PC-9 (cell line): ENCODE measurements at regions of chr1 and their contacts with region 1.

Region 1: GRCh38 chr1:59296358-59297256 is at the start of gene FGGY:
- DNase-seq: peak; percentile 95 to 97
- H3K4me3 ChIP-seq: peak within 1 kb of the TSS; percentile 78
- H3K27ac ChIP-seq: peak within 1 kb of the TSS; percentile 96
- H3K4me1 ChIP-seq: peaks cover 32% of the 10 kb centered on the region
- H3K27me3 ChIP-seq: no peaks in the 10 kb centered on the region
- CTCF ChIP-seq: no peak
- total RNA-seq, gene FGGY: 17.8 and 22.5 TPM in 2 replicates

Region 2: GRCh38 chr1:58266242-58266641 is 1030.4 kb before region 1 on chr1:
- CTCF ChIA-PET with region 1: no interaction called
- POLR2A ChIA-PET with region 1: interaction called, 19 read pairs
- intact Hi-C with region 1: no loop called
- DNase-seq: no peak
- H3K4me3 ChIP-seq: no peak overlapping the region
- H3K27ac ChIP-seq: no peak overlapping the region
- H3K4me1 ChIP-seq: no peaks in the 10 kb centered on the region
- H3K27me3 ChIP-seq: peaks cover 11% of the 10 kb centered on the region; the same call in 1 of the 2 replicates
- CTCF ChIP-seq: no peak

Region 3: GRCh38 chr1:58883037-58883887 is 413.3 kb before region 1 on chr1:
- CTCF ChIA-PET with region 1: no interaction called
- POLR2A ChIA-PET with region 1: no interaction called
- intact Hi-C with region 1: loop called (anchors 1 kb)
- DNase-seq: peak; percentile 87 to 98
- H3K4me3 ChIP-seq: peak overlapping the region; percentile 16; the same call in 1 of the 2 replicates
- H3K27ac ChIP-seq: peak overlapping the region; percentile 99
- H3K4me1 ChIP-seq: peaks cover 68% of the 10 kb centered on the region
- H3K27me3 ChIP-seq: no peaks in the 10 kb centered on the region
- CTCF ChIP-seq: no peak

Region 4: DNA sequence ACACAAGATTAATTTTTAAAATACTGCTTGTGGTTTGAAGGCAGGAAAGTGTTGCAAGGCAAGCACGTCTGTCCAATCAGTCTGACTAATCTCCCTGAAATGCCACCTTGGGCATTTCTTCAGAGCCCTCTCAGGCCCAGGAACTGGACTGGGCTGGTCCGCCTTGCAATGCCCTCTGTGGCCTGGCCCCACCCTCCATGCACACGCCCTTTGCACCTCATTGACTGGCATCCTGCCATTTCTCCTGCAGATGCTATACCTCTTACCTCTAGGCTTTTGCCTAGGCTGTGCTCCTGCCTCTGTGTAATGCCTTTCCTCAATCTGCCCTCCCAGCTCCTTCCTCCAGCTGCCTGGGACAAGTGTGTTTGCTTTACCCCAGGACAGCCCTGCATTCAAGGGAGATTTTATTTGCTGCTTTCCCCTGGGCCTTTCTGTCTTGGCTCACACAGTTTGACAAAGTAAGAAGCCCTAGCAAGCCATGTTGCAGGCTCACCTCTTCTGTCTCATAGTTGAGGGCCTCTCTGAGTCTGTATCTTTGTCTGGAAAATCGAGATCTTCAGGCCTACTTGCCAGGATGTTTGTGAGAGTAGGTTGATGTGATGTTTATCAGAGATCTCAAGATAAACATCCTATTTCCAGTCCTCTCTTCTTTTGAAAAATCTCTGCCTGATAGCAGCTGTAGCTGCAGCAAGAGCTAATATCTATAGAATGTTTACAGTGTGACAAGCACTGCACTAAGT is 363.6 kb before region 1 on chr1:
- CTCF ChIA-PET with region 1: no interaction called
- POLR2A ChIA-PET with region 1: no interaction called
- intact Hi-C with region 1: loop called (anchors 1 kb)
- DNase-seq: peak; percentile 97 to 98
- H3K4me3 ChIP-seq: peak overlapping the region; percentile 13; the same call in 1 of the 2 replicates
- H3K27ac ChIP-seq: peak overlapping the region; percentile 94
- H3K4me1 ChIP-seq: peaks cover 76% of the 10 kb centered on the region
- H3K27me3 ChIP-seq: no peaks in the 10 kb centered on the region
- CTCF ChIP-seq: no peak

Region 5: GRCh38 chr1:59143133-59143487 is 153.5 kb before region 1 on chr1:
- CTCF ChIA-PET with region 1: no interaction called
- POLR2A ChIA-PET with region 1: no interaction called
- intact Hi-C with region 1: loop called (anchors 1 kb)
- DNase-seq: peak; percentile 76 to 99
- H3K4me3 ChIP-seq: peak overlapping the region; percentile 14; the same call in 1 of the 2 replicates
- H3K27ac ChIP-seq: peak overlapping the region; percentile 94
- H3K4me1 ChIP-seq: peaks cover 87% of the 10 kb centered on the region
- H3K27me3 ChIP-seq: no peaks in the 10 kb centered on the region
- CTCF ChIP-seq: no peak

Region 6: GRCh38 chr1:59422921-59423575 is 126.4 kb after region 1 on chr1:
- CTCF ChIA-PET with region 1: no interaction called
- POLR2A ChIA-PET with region 1: interaction called, 10 read pairs
- intact Hi-C with region 1: loop called (anchors 2 kb)
- DNase-seq: peak in 1 of 2 experiments; percentile 36
- H3K4me3 ChIP-seq: no peak overlapping the region
- H3K27ac ChIP-seq: no peak overlapping the region
- H3K4me1 ChIP-seq: peaks cover 25% of the 10 kb centered on the region
- H3K27me3 ChIP-seq: no peaks in the 10 kb centered on the region
- CTCF ChIP-seq: no peak

Region 7: DNA sequence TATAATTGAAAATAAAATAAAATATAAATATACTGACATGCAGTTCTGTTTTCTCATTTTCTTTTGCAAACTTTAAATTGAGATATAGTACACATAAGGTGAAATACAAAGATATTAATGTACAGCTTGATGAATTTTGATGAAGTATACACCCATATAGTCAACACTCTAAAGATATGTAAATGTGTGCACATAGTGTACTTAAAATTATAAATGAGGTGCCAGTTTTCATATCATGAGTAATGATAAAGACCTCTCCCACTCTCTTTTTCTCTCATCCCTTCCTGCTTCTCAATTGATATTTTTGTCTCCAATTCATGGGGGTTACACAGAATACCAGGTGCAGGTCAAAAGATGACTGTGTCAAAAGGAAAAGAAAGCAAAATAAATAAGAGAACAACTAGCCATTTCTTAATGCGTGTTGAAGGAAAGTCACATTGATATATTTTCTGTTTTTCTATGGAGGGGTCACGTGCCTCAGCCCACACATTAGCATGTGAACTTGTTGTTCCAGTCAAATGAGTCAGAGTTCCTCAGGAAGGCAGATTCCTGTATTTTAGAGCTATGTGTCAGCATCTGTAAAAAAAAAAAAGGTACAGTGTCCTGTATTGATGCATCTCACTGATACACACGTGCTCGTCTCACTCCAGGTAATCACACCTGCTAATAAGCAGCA is 453.9 kb after region 1 on chr1:
- CTCF ChIA-PET with region 1: no interaction called
- POLR2A ChIA-PET with region 1: no interaction called
- intact Hi-C with region 1: loop called (anchors 2 kb)
- DNase-seq: peak; percentile 37 to 83
- H3K4me3 ChIP-seq: no peak overlapping the region
- H3K27ac ChIP-seq: peak overlapping the region; percentile 24; the same call in 1 of the 2 replicates
- H3K4me1 ChIP-seq: peaks cover 11% of the 10 kb centered on the region
- H3K27me3 ChIP-seq: no peaks in the 10 kb centered on the region
- CTCF ChIP-seq: no peak